ENCODE measurements at regions of chr9 and their contacts with region 1.

Region 1: GRCh38 chr9:121651295-121652020 is at the start of gene DAB2IP:
- H3K4me3 ChIP-seq: peak within 1 kb of the TSS; percentile 59
- H3K27ac ChIP-seq: peak within 1 kb of the TSS; percentile 68; the same call in 1 of the 2 replicates
- H3K4me1 ChIP-seq: peaks cover 13% of the 10 kb centered on the region
- CTCF ChIP-seq: no peak

Region 2: GRCh38 chr9:121621113-121621449 is 30.4 kb before region 1 on chr9:
- CTCF ChIA-PET with region 1: no interaction called
- POLR2A ChIA-PET with region 1: no interaction called
- H3K4me3 ChIP-seq: no peak overlapping the region
- H3K27ac ChIP-seq: no peak overlapping the region
- H3K4me1 ChIP-seq: no peaks in the 10 kb centered on the region
- CTCF ChIP-seq: no peak

Region 3: DNA sequence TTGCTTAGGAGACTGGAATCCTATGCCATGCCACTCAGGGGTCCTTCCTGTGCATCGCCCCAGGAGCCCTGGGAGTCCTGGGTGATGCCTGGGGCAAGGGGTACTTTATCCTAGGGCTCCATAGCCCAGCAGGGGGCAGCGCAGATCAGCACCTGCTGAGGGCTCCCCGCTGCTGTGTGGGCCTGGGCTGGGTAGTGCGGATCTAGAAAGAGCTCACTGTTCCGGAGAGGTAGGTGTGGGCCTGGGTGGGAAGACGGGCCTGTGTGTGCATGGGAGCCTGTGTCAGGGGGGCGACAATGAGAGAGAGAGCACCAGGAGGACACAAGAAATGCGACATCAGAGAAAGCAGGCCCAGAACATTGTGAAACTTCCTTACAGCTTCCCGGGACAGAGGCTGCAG is 11.4 kb before region 1 on chr9:
- CTCF ChIA-PET with region 1: interaction called, 11 read pairs
- POLR2A ChIA-PET with region 1: interaction called, 4 read pairs
- H3K4me3 ChIP-seq: no peak overlapping the region
- H3K27ac ChIP-seq: no peak overlapping the region
- H3K4me1 ChIP-seq: no peaks in the 10 kb centered on the region
- CTCF ChIP-seq: 0 out of 2 replicates have a peak, but pooled peaks have one; percentile 18

Measured in HEK293 (cell line).